ENCODE measurements at regions of chr22 and their contacts with region 1.

Region 1: GRCh38 chr22:30005213-30005857 is 74.9 kb upstream of the HORMAD2 start:
- DNase-seq: peak in 3 of 4 donors; percentile 51 to 75 (median 66)
- ATAC-seq: peak; percentile 96
- H3K4me3 ChIP-seq: no peak overlapping the region
- H3K27ac ChIP-seq: no peak overlapping the region
- H3K4me1 ChIP-seq: no peaks in the 10 kb centered on the region
- H3K27me3 ChIP-seq: no peaks in the 10 kb centered on the region
- CTCF ChIP-seq: peak; percentile 91 to 97

Region 2: DNA sequence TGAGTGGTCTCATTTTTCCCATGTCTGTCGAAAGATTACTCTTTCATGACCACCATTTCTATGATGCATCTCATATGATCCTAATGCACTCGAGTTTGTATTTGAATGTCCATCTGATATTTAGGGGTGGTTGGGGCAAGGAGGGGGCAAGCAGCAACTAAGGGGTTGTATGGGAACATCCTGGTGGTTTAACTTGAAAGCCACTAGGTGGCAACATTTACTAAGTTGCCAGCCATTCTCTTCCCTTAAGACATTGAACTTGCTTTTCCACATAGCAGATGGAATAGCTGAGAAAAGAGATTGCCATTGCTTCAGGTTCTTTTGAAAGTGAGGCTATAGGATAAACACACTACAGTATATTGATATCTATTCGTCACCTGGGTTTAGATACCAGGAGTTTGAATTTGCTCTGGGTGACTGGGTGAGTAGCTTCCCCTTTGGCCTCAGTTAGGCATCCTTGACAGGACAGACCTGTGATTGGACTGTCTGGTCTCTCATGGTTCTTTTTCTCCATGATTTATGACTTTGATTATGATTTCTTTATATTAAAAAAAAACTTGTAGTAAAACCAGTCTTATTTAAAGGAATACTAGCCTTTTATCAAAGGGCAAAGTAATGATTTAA is 369.5 kb before region 1 on chr22:
- intact Hi-C with region 1: loop called in 1 of 2 experiments (anchors 10 kb)
- DNase-seq: peak in 1 of 4 donors; percentile 39
- ATAC-seq: peak; percentile 89
- H3K4me3 ChIP-seq: no peak overlapping the region
- H3K27ac ChIP-seq: no peak overlapping the region
- H3K4me1 ChIP-seq: peaks cover 2 to 12% of the 10 kb centered on the region in 2 donors
- H3K27me3 ChIP-seq: no peaks in the 10 kb centered on the region
- CTCF ChIP-seq: peak; percentile 33 to 58

Region 3: GRCh38 chr22:29925402-29925801 is 79.9 kb before region 1 on chr22:
- intact Hi-C with region 1: no loop called
- DNase-seq: no peak
- ATAC-seq: no peak
- H3K4me3 ChIP-seq: no peak overlapping the region
- H3K27ac ChIP-seq: no peak overlapping the region
- H3K4me1 ChIP-seq: peaks cover 0 to under 1% of the 10 kb centered on the region in 2 donors
- H3K27me3 ChIP-seq: no peaks in the 10 kb centered on the region
- CTCF ChIP-seq: no peak

Region 4: GRCh38 chr22:29951791-29952413 is 53.4 kb before region 1 on chr22:
- intact Hi-C with region 1: no loop called
- DNase-seq: no peak
- ATAC-seq: peak; percentile 30
- H3K4me3 ChIP-seq: no peak overlapping the region
- H3K27ac ChIP-seq: no peak overlapping the region
- H3K4me1 ChIP-seq: peaks cover 10 to 41% of the 10 kb centered on the region in 2 donors
- H3K27me3 ChIP-seq: no peaks in the 10 kb centered on the region
- CTCF ChIP-seq: no peak

Region 5: GRCh38 chr22:30305519-30305905 is 300.2 kb after region 1 on chr22:
- intact Hi-C with region 1: no loop called
- DNase-seq: peak in 2 of 4 donors; percentile 64 to 75
- ATAC-seq: peak; percentile 38
- H3K4me3 ChIP-seq: no peak overlapping the region
- H3K27ac ChIP-seq: peak overlapping the region; percentile 85 to 88
- H3K4me1 ChIP-seq: peaks cover 68 to 100% of the 10 kb centered on the region in 2 donors
- H3K27me3 ChIP-seq: no peaks in the 10 kb centered on the region
- CTCF ChIP-seq: no peak

Measured in left lung (tissue), 14 donors.